CD14-positive monocyte (primary cell): ENCODE measurements at regions of chr11 and their contacts with region 1.

Region 1: DNA sequence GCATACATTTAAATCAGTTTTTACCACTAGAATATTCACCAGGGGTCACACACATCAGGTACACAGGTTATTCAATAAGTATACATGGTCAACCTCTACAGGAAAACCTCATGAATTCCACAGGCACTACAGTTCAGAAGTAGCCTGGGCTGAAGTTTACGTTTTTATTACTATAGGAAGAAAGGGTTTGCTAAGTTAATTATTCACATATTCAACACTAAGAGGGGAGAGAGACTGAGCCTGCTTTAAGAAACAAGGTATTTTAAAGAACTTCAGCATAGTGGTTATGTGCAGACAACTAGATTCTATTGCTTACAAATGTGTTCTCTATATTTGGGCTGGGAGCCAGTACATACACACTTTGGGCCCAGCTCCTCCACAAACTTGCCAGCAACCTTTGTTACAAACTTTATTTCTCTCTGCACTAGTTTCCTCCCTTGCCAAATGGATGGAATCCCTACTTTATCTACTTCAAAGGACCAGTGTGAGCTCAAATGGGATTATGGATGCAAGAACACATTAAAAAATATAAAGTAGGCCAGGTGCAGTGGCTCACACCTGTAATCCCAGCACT is 31.9 kb downstream of the IL18BP start:
- DNase-seq: no peak
- H3K4me3 ChIP-seq: no peak overlapping the region
- H3K4me3 Mint-ChIP-seq: no peak overlapping the region
- H3K27ac ChIP-seq: no peak overlapping the region
- H3K27ac Mint-ChIP-seq: peak overlapping the region in 1 of 7 donors; percentile 10
- H3K4me1 ChIP-seq: peaks cover 3 to 6% of the 10 kb centered on the region in 2 donors
- H3K4me1 Mint-ChIP-seq: peaks cover 11% of the 10 kb centered on the region
- H3K27me3 ChIP-seq: no peaks in the 10 kb centered on the region
- H3K27me3 Mint-ChIP-seq: no peaks in the 10 kb centered on the region
- CTCF ChIP-seq: no peak

Region 2: DNA sequence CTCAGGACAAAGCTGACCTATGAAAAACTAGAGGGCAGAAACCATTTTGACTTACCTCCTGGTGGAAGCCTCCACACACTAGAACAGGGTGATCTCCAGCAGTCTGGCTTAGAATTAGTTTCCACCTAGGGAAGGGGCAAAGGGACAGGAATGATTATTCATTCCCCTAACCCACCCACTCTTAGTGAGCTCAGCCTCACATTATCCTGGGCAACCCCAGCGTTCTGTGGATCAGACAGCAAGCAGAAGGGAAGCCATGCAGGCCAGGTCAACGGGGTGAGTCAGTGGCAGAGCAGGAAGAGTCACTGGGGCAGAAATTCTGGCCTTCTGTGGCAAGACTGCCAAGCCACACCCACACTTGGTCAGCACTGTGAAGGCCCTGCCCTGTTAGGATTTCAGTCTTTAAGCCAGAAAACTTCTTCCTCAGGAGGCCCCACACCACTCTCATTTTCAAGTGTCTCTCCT is 39.3 kb after region 1 on chr11:
- intact Hi-C with region 1: loop called in 1 of 2 experiments (anchors 5 kb)
- DNase-seq: peak; percentile 92 to 97 (median 96)
- H3K4me3 ChIP-seq: peak overlapping the region; percentile 0 to 61 (median 40)
- H3K4me3 Mint-ChIP-seq: peak overlapping the region; percentile 56 to 92
- H3K27ac ChIP-seq: peak overlapping the region; percentile 88 to 96
- H3K27ac Mint-ChIP-seq: peak overlapping the region; percentile 97 to 99 (median 99)
- H3K4me1 ChIP-seq: peaks cover 50 to 64% of the 10 kb centered on the region in 2 donors
- H3K4me1 Mint-ChIP-seq: peaks cover 60% of the 10 kb centered on the region
- H3K27me3 ChIP-seq: no peaks in the 10 kb centered on the region
- H3K27me3 Mint-ChIP-seq: no peaks in the 10 kb centered on the region
- CTCF ChIP-seq: no peak

Region 3: DNA sequence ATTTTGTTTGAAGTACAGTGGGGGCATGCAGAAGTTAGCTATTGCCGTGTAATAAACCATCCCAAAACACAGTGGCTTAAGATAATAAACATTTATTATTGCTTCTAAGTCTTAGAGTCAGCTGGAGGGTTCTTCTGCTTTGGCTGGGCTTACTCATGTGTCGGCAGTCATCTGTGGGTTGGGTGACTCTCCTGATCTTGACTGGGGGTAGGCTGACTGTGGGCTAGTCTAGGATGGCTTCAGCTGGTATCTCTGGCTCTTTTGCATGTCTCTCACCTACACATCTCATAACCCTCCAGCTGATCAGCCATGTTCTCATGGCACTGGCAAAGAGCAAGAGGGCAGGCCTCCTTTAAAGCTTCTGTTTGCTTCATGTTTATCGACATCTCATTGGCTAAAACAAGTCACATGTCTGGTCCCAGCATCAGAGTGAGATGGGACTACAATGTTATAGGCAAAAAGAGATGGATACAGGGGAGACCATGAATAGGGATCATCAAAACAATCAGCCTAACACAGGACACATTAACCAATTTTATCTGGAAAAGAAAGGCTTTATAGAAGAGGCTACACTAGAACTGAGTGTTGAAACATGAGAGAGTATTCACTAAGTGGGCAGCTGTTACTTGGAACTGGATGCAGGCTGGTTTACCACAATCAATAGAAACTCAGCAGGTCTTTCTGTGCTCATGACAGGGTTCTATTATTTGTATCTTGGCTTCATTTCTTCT is 55.2 kb after region 1 on chr11:
- intact Hi-C with region 1: loop called (anchors 2 to 5 kb)
- DNase-seq: no peak
- H3K4me3 ChIP-seq: no peak overlapping the region
- H3K4me3 Mint-ChIP-seq: no peak overlapping the region
- H3K27ac ChIP-seq: no peak overlapping the region
- H3K27ac Mint-ChIP-seq: peak overlapping the region in 4 of 7 donors; percentile 39 to 76 (median 56)
- H3K4me1 ChIP-seq: peaks cover 23 to 25% of the 10 kb centered on the region in 2 donors
- H3K4me1 Mint-ChIP-seq: peaks cover 24% of the 10 kb centered on the region
- H3K27me3 ChIP-seq: no peaks in the 10 kb centered on the region
- H3K27me3 Mint-ChIP-seq: peaks cover 0 to 2% (median 0%) of the 10 kb centered on the region in 3 donors
- CTCF ChIP-seq: no peak

Region 4: GRCh38 chr11:72091005-72091691 is 60.6 kb after region 1 on chr11:
- intact Hi-C with region 1: loop called (anchors 2 to 5 kb)
- DNase-seq: peak; percentile 86 to 92 (median 91)
- H3K4me3 ChIP-seq: peak overlapping the region in 1 of 3 experiments; percentile 10
- H3K4me3 Mint-ChIP-seq: peak overlapping the region in 1 of 2 donors; percentile 37
- H3K27ac ChIP-seq: peak overlapping the region; percentile 42 to 70
- H3K27ac Mint-ChIP-seq: peak overlapping the region; percentile 68 to 96 (median 87)
- H3K4me1 ChIP-seq: peaks cover 23% of the 10 kb centered on the region in 2 donors
- H3K4me1 Mint-ChIP-seq: peaks cover 31% of the 10 kb centered on the region
- H3K27me3 ChIP-seq: no peaks in the 10 kb centered on the region
- H3K27me3 Mint-ChIP-seq: peaks cover 0 to 2% (median 0%) of the 10 kb centered on the region in 3 donors
- CTCF ChIP-seq: peak; percentile 96

Region 5: DNA sequence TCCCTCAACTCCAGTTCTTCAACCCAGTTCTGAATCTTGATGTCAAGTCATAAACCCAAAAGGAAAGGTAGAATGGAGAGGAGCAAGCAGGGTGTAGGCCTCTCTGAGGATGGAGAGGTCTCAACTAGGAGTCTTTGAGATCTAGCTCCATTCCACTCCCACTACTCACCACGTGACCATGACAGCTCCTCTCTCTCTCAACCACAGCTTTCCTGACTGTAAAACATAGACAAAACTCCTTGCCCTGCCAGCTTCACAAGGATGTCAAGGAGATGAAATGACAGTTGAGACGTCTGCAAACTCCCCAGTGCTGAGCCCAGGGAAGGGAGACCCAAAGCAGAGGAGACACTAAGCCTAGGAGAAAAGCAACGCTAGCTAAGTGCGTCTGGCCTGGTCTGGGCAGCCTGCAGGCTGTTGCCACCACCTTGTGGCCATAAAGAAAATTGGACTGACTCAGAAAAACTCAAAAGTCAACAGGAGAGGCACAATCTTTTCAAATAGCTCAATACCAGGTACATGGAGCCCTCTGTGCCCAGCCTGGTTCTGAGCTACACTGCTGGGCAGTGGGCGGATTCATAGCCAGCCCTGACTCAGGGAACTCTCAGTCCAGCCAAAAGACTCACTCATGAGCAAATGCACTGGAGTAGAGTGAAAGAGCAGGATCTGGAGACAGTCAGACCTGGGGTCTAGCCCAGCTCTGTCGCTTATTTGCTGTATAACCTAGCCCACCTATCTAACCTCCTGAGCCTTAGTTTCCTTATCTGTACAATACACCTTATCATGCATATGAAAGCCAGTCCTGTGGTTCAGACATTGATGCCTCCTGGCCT is 400.4 kb after region 1 on chr11:
- intact Hi-C with region 1: loop called in 1 of 2 experiments (anchors 5 kb)
- DNase-seq: peak; percentile 46 to 63 (median 63)
- H3K4me3 ChIP-seq: peak overlapping the region in 1 of 3 experiments; percentile 55
- H3K4me3 Mint-ChIP-seq: peak overlapping the region; percentile 62 to 91
- H3K27ac ChIP-seq: peak overlapping the region in 1 of 2 donors; percentile 80
- H3K27ac Mint-ChIP-seq: peak overlapping the region; percentile 74 to 92 (median 82)
- H3K4me1 ChIP-seq: peaks cover 57 to 59% of the 10 kb centered on the region in 2 donors
- H3K4me1 Mint-ChIP-seq: peaks cover 59% of the 10 kb centered on the region
- H3K27me3 ChIP-seq: no peaks in the 10 kb centered on the region
- H3K27me3 Mint-ChIP-seq: peaks cover 0 to 1% (median 0%) of the 10 kb centered on the region in 3 donors
- CTCF ChIP-seq: peak; percentile 90